Naive thymus-derived CD4-positive, alpha-beta T cell (primary cell): ENCODE measurements at regions of chr10 and their contacts with region 1.

Region 1: DNA sequence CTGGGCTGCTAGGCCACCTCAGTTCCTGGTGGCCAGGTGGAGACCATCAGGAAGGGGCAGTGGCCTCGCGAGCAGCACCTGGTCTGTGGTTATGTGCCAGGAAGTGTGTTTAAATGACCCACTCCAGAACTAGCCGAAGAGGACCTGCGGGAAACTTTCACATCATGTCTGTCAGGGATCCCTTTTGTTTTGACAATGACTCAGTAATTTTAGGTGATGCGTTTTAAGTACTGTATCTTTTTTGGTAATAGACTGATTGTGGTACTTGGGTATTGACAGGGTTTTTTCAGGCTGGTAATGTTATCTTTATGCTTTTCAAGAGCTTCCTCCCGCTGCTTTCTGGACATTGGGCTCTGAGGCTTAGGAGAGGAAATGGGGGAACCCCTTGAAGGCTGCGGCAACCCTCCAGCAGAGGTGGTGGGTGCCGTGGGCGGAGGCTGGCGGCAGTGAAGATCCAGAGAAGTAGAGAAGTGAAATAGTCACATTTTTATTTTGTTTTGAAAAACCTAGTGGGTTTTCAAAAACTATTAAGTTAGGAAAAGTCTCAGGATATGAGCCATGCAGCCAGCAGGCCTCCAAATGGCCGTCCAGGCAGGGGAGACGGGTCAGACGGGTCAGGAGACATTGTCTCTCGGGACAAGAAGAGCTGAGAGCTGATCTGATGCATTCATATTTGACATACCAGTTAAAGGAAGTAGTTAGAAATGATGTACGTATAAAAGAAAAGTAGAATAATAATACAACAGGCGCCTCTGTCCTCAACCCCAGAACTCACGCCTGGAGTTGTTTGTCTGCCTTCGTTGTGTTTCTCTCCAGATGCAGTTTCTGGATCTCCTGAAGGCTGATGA is 27.7 kb downstream of the PPP2R2D start:
- DNase-seq: peak in 6 of 9 donors; percentile 24 to 68 (median 34)
- ATAC-seq: peak; percentile 85
- H3K4me3 ChIP-seq: no peak overlapping the region
- H3K4me3 Mint-ChIP-seq: peak overlapping the region; percentile 55 to 84 (median 78)
- H3K27ac ChIP-seq: peak overlapping the region; percentile 32
- H3K27ac Mint-ChIP-seq: peak overlapping the region; percentile 79 to 94 (median 86)
- H3K4me1 ChIP-seq: peaks cover 11 to 46% of the 10 kb centered on the region in 2 donors
- H3K4me1 Mint-ChIP-seq: peaks cover 53 to 97% (median 84%) of the 10 kb centered on the region in 7 donors
- H3K27me3 ChIP-seq: no peaks in the 10 kb centered on the region
- H3K27me3 Mint-ChIP-seq: no peaks in the 10 kb centered on the region

Region 2: GRCh38 chr10:131915990-131916766 is 12.3 kb before region 1 on chr10:
- CTCF ChIA-PET with region 1: no interaction called
- POLR2A ChIA-PET with region 1: interaction called, 4 read pairs
- intact Hi-C with region 1: loop called in 1 of 2 experiments (anchors 2 kb)
- DNase-seq: no peak
- ATAC-seq: no peak
- H3K4me3 ChIP-seq: no peak overlapping the region
- H3K4me3 Mint-ChIP-seq: peak overlapping the region in 3 of 10 donors; percentile 21 to 39 (median 30)
- H3K27ac ChIP-seq: no peak overlapping the region
- H3K27ac Mint-ChIP-seq: peak overlapping the region in 5 of 9 donors; percentile 11 to 81 (median 43)
- H3K4me1 ChIP-seq: peaks cover 6 to 40% of the 10 kb centered on the region in 2 donors
- H3K4me1 Mint-ChIP-seq: peaks cover 42 to 98% (median 90%) of the 10 kb centered on the region in 7 donors
- H3K27me3 ChIP-seq: no peaks in the 10 kb centered on the region
- H3K27me3 Mint-ChIP-seq: no peaks in the 10 kb centered on the region